ENCODE measurements at regions of chr2 and their contacts with region 1.

Region 1: GRCh38 chr2:62406573-62407043 is 99.4 kb downstream of the TMEM17 start:
- DNase-seq: no peak
- ATAC-seq: no peak
- H3K4me3 ChIP-seq: no peak overlapping the region
- H3K27ac ChIP-seq: no peak overlapping the region
- H3K4me1 ChIP-seq: peaks cover 11% of the 10 kb centered on the region
- H3K27me3 ChIP-seq: no peaks in the 10 kb centered on the region
- CTCF ChIP-seq: no peak
- POLR2A ChIP-seq: no peak

Region 2: GRCh38 chr2:61924895-61925663 is 481.5 kb before region 1 on chr2:
- intact Hi-C with region 1: loop called (anchors 5 kb)
- DNase-seq: no peak
- ATAC-seq: no peak
- H3K4me3 ChIP-seq: no peak overlapping the region
- H3K27ac ChIP-seq: no peak overlapping the region
- H3K4me1 ChIP-seq: peaks cover 7% of the 10 kb centered on the region
- H3K27me3 ChIP-seq: no peaks in the 10 kb centered on the region
- CTCF ChIP-seq: no peak
- POLR2A ChIP-seq: no peak